ENCODE measurements at regions of chr15 and their contacts with region 1.

Region 1: DNA sequence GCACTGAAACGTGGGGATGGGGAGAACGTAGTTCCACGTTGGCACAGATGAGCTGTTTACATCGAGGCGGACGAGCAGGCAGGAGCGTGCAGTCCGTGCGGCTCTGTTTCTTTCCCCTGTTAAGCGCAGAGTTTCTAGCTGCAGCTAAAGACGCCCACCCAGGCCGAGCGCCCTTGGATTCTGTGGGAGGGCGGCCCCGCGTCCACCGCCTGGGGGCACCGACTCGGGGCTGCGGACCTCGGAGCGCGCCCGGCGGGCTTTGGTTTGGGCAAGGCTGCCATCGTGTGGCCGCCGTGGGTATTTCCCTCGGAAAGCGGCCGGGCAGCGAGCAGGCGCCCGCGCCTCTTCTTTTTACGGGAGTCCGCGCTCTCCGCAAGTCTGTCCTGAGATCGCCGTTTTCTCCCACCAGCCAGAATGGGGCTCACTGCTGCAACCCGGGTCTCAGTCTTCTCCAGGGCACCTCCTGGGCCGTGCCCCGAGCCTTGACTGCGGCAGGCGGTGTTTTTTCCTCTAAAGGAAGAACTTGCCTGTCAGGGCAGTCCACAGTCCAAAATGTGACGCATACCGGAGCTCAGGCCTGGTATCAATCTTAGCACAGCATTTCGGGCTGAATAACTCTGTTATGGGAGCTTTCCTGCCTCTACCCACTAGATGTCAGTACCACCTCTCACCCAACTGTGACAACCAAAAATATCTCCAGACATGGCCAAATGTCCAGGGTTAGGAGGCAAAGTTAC is 219.9 kb upstream of the IGF1R start:
- DNase-seq: peak; percentile 49 to 97
- H3K4me3 ChIP-seq: peak overlapping the region; percentile 11 to 54 (median 24); a peak in 5 of 8 replicates
- H3K27ac ChIP-seq: no peak overlapping the region
- H3K4me1 ChIP-seq: peaks cover 0 to 2% (median under 1%) of the 10 kb centered on the region in 4 experiments; a peak in 2 of 7 replicates
- H3K27me3 ChIP-seq: peaks cover 3 to 26% (median 18%) of the 10 kb centered on the region in 4 experiments
- CTCF ChIP-seq: peak; percentile 63 to 90 (median 66)
- EP300 ChIP-seq: no peak
- POLR2A ChIP-seq: no peak
- RAD21 ChIP-seq: peak; percentile 72 to 87

Region 2: GRCh38 chr15:97995881-97996603 is 432.4 kb before region 1 on chr15:
- CTCF ChIA-PET with region 1: no interaction called
- POLR2A ChIA-PET with region 1: no interaction called
- DNase-seq: peak in 1 of 2 experiments; percentile 49
- H3K4me3 ChIP-seq: no peak overlapping the region
- H3K27ac ChIP-seq: no peak overlapping the region
- H3K4me1 ChIP-seq: no peaks in the 10 kb centered on the region
- H3K27me3 ChIP-seq: no peaks in the 10 kb centered on the region
- CTCF ChIP-seq: peak; percentile 42 to 63 (median 53)
- EP300 ChIP-seq: no peak
- POLR2A ChIP-seq: no peak
- RAD21 ChIP-seq: peak; percentile 44 to 59

Region 3: GRCh38 chr15:98442379-98442833 is 14.0 kb after region 1 on chr15:
- CTCF ChIA-PET with region 1: interaction called, 66 read pairs
- POLR2A ChIA-PET with region 1: no interaction called
- DNase-seq: peak; percentile 25 to 80
- H3K4me3 ChIP-seq: no peak overlapping the region
- H3K27ac ChIP-seq: no peak overlapping the region
- H3K4me1 ChIP-seq: no peaks in the 10 kb centered on the region
- H3K27me3 ChIP-seq: no peaks in the 10 kb centered on the region; a peak in 1 of 7 replicates
- CTCF ChIP-seq: peak; percentile 58 to 88 (median 81)
- EP300 ChIP-seq: no peak
- POLR2A ChIP-seq: no peak
- RAD21 ChIP-seq: peak; percentile 93 to 95

Measured in H1 (cell line).